Uterus (tissue), 4 donors: ENCODE measurements at regions of chr14 and their contacts with region 1.

Region 1: DNA sequence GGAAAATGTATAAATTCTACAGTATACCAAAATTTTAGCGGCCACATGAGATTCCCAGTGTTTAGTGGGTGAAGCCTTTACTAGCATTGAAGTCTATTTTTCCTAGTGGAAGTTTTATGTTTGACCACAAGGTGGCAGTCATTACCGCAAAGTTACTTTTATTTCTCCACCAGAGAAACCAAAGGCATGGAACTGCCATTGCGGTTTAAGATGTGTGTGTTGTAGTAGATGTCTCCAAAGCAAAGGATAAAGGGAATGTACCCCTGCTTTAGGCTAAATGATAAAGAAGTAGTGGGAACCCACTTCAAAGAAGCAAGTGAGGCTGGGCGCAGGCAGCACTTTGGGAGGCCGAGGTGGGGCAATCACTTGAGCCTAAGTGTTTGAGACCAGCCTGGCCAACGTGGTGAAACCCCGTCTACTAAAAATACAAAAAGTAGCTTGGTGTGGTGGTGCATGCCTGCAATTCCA is 140.5 kb downstream of the PRKCH start:
- DNase-seq: no peak
- H3K4me3 ChIP-seq: no peak overlapping the region
- H3K27ac ChIP-seq: no peak overlapping the region
- H3K4me1 ChIP-seq: no peaks in the 10 kb centered on the region
- H3K27me3 ChIP-seq: no peaks in the 10 kb centered on the region
- CTCF ChIP-seq: peak; percentile 69 to 86 (median 84)
- POLR2A ChIP-seq: no peak

Region 2: DNA sequence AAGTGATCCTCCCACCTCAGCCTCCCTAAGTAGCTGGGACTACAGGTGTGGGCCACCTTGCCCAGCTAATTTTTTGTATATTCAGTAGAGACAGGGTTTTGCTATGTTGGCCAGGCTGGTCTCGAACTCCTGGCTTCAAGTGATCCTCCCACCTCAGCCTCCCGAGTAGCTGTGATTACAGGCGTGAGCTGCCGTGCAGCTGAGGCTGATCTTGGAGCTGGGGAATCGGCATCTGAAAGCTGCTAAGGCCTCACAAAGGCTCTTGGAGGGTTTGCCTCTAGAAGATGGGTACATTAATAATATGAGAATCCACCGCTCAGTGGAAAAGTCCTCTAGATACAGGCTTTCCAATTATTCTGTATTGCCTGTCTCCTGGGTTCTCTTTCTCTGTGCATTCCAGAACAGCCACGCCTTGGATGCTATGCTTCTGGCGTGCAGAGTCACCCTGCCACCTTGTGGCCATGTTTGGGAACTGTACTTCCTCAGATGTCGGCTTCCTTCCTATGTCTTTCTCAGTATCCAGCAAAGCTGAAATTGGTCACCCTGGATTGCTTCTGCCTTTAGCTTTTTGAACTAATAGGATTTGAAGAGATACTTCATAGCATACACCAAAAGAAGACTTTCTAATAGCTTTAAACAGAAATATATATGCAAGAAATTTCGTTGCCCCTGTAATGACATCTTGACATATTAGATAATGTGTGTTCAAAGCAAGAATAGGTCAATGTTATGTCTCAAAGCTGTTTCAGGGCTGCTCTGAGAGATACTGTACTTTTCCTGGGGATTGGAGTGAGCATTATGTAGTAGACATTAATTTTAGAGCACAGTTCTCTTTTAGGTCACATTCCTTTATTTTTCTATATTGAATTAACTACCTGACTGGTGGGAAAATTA is 375.7 kb after region 1 on chr14:
- intact Hi-C with region 1: loop called (anchors 5 kb)
- DNase-seq: peak; percentile 64 to 67
- H3K4me3 ChIP-seq: no peak overlapping the region
- H3K27ac ChIP-seq: no peak overlapping the region
- H3K4me1 ChIP-seq: no peaks in the 10 kb centered on the region
- H3K27me3 ChIP-seq: no peaks in the 10 kb centered on the region
- CTCF ChIP-seq: peak; percentile 81 to 91 (median 88)
- POLR2A ChIP-seq: no peak